Adrenal gland (tissue), 19 donors: ENCODE measurements at regions of chr18 and their contacts with region 1.

Region 1: DNA sequence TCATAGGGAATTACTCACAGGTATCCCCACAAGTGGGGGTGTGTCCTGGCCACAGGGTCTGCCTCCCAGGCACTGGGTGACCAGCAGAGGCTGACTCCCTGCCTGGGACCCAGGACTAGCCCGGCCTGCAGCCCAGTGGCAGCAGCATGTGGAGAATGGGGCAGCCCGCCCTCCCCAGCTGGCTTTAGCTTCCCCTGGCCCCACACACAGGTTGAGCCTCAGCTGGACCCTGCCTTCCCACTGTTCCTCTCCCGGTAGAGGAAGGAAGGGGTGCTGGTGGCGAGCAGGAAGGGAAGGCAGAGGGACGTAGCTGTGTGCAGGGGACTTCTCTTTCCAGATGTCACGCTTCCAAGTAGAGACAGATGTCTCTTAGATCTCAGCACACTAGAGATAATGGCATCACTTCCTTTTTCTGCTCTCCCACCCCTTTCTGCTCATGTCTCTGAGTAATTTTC is 51.4 kb downstream of the EMILIN2 start:
- DNase-seq: peak in 3 of 7 donors; percentile 30 to 47 (median 32)
- H3K4me3 ChIP-seq: no peak overlapping the region
- H3K27ac ChIP-seq: no peak overlapping the region
- H3K4me1 ChIP-seq: peaks cover 0 to 2% of the 10 kb centered on the region in 2 donors
- H3K27me3 ChIP-seq: peaks cover 4% of the 10 kb centered on the region
- CTCF ChIP-seq: no peak
- POLR2A ChIP-seq: no peak

Region 2: GRCh38 chr18:2839208-2839607 is 59.0 kb before region 1 on chr18:
- intact Hi-C with region 1: loop called in 1 of 2 experiments (anchors 10 kb)
- DNase-seq: no peak
- H3K4me3 ChIP-seq: no peak overlapping the region
- H3K27ac ChIP-seq: no peak overlapping the region
- H3K4me1 ChIP-seq: no peaks in the 10 kb centered on the region
- H3K27me3 ChIP-seq: peaks cover 10% of the 10 kb centered on the region
- CTCF ChIP-seq: no peak
- POLR2A ChIP-seq: no peak

Region 3: GRCh38 chr18:2850816-2851215 is 47.4 kb before region 1 on chr18:
- intact Hi-C with region 1: no loop called
- DNase-seq: no peak
- H3K4me3 ChIP-seq: no peak overlapping the region
- H3K27ac ChIP-seq: no peak overlapping the region
- H3K4me1 ChIP-seq: peaks cover 11 to 20% of the 10 kb centered on the region in 2 donors
- H3K27me3 ChIP-seq: peaks cover 22% of the 10 kb centered on the region
- CTCF ChIP-seq: no peak
- POLR2A ChIP-seq: no peak

Region 4: DNA sequence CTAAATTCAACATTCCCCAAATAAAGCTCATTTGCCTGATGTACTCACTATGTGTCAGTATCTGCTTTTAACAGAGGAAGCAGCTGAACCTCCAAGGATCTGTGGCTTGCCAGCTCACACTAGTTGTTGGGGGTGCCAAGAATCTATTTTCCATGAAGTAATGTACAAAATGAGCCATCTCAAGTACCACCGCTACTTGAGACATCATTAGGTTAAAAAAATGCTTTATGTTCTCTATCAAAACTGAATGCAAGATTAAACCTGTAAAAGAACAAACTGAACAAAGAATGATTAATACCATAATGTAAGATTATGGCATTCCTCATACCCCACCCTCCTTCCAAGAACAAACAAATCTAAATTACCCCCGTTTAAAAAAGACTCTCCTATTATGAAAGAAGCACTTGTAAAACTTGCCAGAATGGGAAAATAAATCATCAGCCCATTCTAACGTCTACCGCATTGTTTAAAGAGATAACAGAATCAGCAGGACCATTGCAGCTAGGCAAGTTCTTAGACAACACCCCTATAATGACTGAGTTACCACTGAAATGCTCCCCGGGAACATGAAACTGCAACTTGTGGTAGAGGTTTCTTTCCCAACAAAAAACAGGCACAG is 1085.2 kb after region 1 on chr18:
- intact Hi-C with region 1: no loop called
- DNase-seq: peak in 1 of 7 donors; percentile 12
- H3K4me3 ChIP-seq: no peak overlapping the region
- H3K27ac ChIP-seq: no peak overlapping the region
- H3K4me1 ChIP-seq: peaks cover 0 to 17% of the 10 kb centered on the region in 2 donors
- H3K27me3 ChIP-seq: no peaks in the 10 kb centered on the region
- CTCF ChIP-seq: no peak
- POLR2A ChIP-seq: no peak